Ovary (tissue), 10 donors: ENCODE measurements at regions of chr19 and their contacts with region 1.

Region 1: GRCh38 chr19:41570639-41571112 is 5.3 kb upstream of the CEACAM21 start:
- DNase-seq: peak; percentile 34 to 78 (median 61)
- H3K4me3 ChIP-seq: no peak overlapping the region
- H3K27ac ChIP-seq: no peak overlapping the region
- H3K4me1 ChIP-seq: no peaks in the 10 kb centered on the region
- H3K27me3 ChIP-seq: no peaks in the 10 kb centered on the region
- CTCF ChIP-seq: peak in 1 of 3 donors; percentile 34
- EP300 ChIP-seq: no peak
- POLR2A ChIP-seq: no peak

Region 2: GRCh38 chr19:41449865-41450178 is 120.9 kb before region 1 on chr19:
- intact Hi-C with region 1: loop called in 3 of 4 experiments (anchors 5 to 10 kb)
- DNase-seq: no peak
- H3K4me3 ChIP-seq: no peak overlapping the region
- H3K27ac ChIP-seq: no peak overlapping the region
- H3K4me1 ChIP-seq: no peaks in the 10 kb centered on the region
- H3K27me3 ChIP-seq: no peaks in the 10 kb centered on the region
- CTCF ChIP-seq: no peak
- EP300 ChIP-seq: no peak
- POLR2A ChIP-seq: no peak

Region 3: GRCh38 chr19:41457241-41457640 is 113.4 kb before region 1 on chr19:
- intact Hi-C with region 1: loop called in 3 of 4 experiments (anchors 5 to 10 kb)
- DNase-seq: no peak
- H3K4me3 ChIP-seq: no peak overlapping the region
- H3K27ac ChIP-seq: no peak overlapping the region
- H3K4me1 ChIP-seq: peaks cover 4% of the 10 kb centered on the region
- H3K27me3 ChIP-seq: no peaks in the 10 kb centered on the region
- CTCF ChIP-seq: no peak
- EP300 ChIP-seq: no peak
- POLR2A ChIP-seq: no peak